ENCODE measurements at regions of chr16 and their contacts with region 1.

Region 1: DNA sequence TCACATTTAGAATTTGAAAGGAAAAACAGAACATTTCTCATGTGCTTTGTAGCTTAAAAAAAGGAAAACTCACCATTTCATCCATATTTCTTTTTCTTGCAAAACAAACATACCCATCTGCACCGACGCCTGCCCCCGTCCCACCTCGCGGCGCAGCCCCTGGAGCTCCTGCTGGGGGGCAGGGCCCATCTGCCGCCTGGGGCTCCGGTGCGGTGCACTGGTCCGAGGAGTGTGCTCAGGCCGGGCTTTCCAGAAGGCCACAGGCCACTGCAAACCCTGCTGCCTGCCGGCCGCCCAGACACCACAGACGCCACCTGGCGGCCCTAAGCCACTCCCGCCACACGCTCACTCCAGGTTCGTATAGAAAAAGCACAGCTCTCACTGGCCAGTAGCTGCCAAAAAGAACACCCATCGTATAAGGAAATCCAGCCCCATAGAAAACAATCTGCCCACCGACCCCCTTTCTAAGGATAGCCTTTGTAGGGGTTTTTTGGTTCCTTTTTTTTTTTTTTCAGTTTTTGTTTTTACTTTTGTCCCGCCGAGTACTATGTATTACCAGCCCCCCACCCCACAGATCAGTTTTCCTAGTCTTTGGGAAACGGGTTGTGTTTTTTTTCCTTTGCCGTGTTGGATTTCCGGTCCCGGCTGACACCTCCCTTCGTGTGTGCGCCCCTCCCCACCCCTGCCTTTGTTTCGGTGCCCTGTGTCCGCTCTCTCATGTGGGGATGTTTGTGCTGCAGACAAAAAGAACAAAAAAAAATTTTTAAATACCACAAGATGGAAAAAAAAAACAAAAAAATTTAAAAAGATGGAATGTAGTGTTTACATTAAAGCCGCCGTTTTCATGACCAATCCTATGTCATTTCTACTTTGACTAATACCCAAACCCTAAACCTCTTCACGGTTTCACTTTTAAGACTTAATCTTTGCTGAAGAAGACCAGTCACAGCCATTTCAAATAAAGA is 68.8 kb downstream of the AMFR start:
- DNase-seq: no peak
- H3K4me3 ChIP-seq: peak overlapping the region; percentile 34
- H3K27me3 ChIP-seq: no peaks in the 10 kb centered on the region
- CTCF ChIP-seq: peak; percentile 96

Region 2: DNA sequence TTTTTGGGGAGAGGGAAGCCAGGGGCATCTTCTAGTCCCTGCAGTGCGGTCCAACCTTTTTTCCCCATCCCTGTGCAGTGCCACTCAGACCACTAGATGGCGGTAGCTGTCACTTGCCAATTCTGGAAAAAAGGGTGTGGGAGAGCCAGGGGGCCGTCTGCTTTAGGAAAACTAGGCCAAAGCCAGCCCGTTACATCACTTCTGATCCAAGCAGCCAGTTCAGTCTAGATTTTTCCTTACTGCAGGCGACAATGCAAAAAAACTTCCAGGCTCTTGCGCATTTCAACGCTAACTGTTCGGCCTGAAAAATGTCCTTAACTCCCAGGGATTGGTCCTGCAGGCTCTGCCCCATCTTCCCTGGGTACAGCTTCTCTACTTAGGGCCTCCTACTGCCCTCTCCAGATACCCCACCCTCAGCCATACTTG is 412.2 kb before region 1 on chr16:
- CTCF ChIA-PET with region 1: interaction called, 18 read pairs
- POLR2A ChIA-PET with region 1: no interaction called
- DNase-seq: no peak
- H3K4me3 ChIP-seq: no peak overlapping the region
- H3K27me3 ChIP-seq: no peaks in the 10 kb centered on the region
- CTCF ChIP-seq: peak; percentile 97

Region 3: GRCh38 chr16:56327071-56327928 is 29.3 kb before region 1 on chr16:
- CTCF ChIA-PET with region 1: interaction called, 13 read pairs
- POLR2A ChIA-PET with region 1: no interaction called
- DNase-seq: no peak
- H3K4me3 ChIP-seq: no peak overlapping the region
- H3K27me3 ChIP-seq: no peaks in the 10 kb centered on the region
- CTCF ChIP-seq: no peak

Region 4: GRCh38 chr16:56343661-56344526 is 12.7 kb before region 1 on chr16:
- CTCF ChIA-PET with region 1: interaction called, 32 read pairs
- POLR2A ChIA-PET with region 1: no interaction called
- DNase-seq: no peak
- H3K4me3 ChIP-seq: no peak overlapping the region
- H3K27me3 ChIP-seq: no peaks in the 10 kb centered on the region
- CTCF ChIP-seq: no peak

Region 5: DNA sequence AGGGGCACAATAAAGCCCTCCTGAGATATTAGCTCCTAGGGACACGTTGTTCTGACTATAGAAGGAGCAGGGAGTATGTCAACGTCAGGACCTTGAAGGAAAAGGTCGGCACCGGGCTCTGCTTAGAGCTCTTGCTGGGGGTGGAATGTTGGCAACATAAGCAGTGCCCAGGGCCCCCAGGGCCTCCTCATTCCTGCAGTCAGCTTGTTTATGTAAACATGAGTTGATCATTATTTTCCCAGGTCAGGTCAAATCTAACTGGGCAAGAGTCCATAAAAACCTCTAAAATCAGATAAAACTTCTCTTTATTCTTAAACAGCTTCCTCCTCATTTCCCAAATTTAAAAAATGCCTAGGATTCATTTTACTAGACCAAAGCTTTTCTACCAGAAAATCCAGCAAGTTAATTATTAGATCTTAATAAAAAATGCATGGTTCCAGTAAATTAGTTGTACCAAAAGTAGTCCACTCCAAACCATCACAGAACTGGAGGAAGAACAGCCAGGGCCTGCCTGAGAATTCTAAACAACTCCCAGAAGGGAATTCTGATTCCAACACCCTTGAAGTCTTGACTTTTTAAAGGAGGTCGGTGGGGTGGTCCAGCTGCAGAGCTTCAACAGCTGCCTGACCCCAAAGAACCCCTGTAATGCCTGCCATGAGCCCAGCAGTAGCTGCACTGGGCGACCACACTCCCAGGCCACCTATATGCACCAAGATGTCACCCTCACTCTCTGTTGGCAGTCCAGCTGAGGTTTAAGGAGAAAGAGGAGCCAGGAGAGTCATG is 14.5 kb after region 1 on chr16:
- CTCF ChIA-PET with region 1: interaction called, 17 read pairs
- POLR2A ChIA-PET with region 1: no interaction called
- DNase-seq: peak; percentile 23
- H3K4me3 ChIP-seq: no peak overlapping the region
- H3K27me3 ChIP-seq: no peaks in the 10 kb centered on the region
- CTCF ChIP-seq: no peak

Region 6: DNA sequence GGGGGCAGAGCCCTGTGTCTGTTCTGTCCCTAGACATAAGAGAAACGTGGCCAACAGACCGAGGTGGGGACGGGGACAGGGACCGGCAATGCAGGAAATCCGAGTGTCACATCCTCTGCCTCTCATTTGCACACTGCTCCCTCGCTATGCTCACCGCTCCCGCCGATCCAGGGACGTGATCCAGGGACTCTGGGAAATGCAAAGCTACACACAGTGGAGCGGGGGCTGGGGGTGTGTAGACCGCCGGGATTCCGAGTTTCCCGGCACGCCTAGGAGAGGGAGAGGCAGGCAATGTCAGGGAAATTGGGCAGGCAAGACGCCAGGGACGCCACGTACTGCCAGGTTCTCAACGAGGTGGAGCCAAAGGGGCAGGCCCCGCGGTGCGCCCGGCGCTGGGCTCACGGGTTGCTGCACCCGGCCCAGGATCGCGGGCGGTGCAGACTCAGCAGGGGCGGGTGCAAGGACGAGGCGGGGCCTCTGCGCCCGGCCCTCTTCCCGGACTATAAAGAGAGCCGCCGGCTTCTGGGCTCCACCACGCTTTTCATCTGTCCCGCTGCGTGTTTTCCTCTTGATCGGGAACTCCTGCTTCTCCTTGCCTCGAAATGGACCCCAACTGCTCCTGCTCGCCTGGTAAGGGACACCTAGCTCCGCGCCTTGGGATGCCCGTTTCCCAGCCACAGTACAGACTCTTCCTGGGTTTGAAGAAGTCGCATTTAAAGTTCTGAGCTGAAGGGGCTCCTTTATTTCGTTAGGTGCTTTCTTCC is 325.6 kb after region 1 on chr16 and contains the start of gene MT1X:
- CTCF ChIA-PET with region 1: no interaction called
- POLR2A ChIA-PET with region 1: no interaction called
- DNase-seq: peak; percentile 31
- H3K4me3 ChIP-seq: peak within 1 kb of the TSS; percentile 46
- H3K27me3 ChIP-seq: peaks cover 2% of the 10 kb centered on the region; the same call in 1 of the 2 replicates
- CTCF ChIP-seq: no peak
- polyA plus RNA-seq, gene MT1X: 55.5 and 60.2 TPM in 2 replicates

Measured in BJ (cell line).